ENCODE measurements at regions of chr5 and their contacts with region 1.

Region 1: GRCh38 chr5:60141119-60141518 is 247.6 kb upstream of the PDE4D start:
- DNase-seq: no peak
- ATAC-seq: no peak
- H3K4me3 ChIP-seq: no peak overlapping the region
- H3K27ac ChIP-seq: no peak overlapping the region
- H3K4me1 ChIP-seq: no peaks in the 10 kb centered on the region
- H3K27me3 ChIP-seq: no peaks in the 10 kb centered on the region
- CTCF ChIP-seq: no peak

Region 2: DNA sequence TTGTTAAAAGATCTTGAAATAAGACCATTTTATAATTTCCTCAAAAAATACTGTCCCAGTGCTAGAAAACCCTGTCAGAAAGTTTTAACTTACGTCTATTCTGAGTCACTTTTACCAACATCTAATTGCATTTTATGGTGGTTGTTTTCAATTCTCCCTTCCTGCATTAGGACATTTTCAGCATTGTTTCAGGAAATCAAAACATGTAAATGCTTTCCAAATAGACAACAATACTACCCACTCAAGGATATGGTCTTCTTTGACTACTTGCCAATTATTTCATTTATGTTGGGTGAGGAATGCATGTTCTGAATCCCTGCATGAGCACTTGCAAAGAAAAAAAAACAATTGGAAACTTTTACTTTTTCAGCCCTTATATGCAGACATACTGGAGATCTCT is 37.0 kb after region 1 on chr5:
- CTCF ChIA-PET with region 1: no interaction called
- POLR2A ChIA-PET with region 1: no interaction called
- in situ Hi-C with region 1: no loop called
- intact Hi-C with region 1: loop called (anchors 1 kb)
- DNase-seq: no peak
- ATAC-seq: no peak
- H3K4me3 ChIP-seq: no peak overlapping the region
- H3K27ac ChIP-seq: no peak overlapping the region
- H3K4me1 ChIP-seq: no peaks in the 10 kb centered on the region
- H3K27me3 ChIP-seq: no peaks in the 10 kb centered on the region
- CTCF ChIP-seq: no peak

Region 3: GRCh38 chr5:60196382-60197113 is 55.4 kb after region 1 on chr5:
- CTCF ChIA-PET with region 1: no interaction called
- POLR2A ChIA-PET with region 1: no interaction called
- in situ Hi-C with region 1: no loop called
- intact Hi-C with region 1: no loop called
- DNase-seq: no peak
- ATAC-seq: no peak
- H3K4me3 ChIP-seq: no peak overlapping the region
- H3K27ac ChIP-seq: no peak overlapping the region
- H3K4me1 ChIP-seq: no peaks in the 10 kb centered on the region
- H3K27me3 ChIP-seq: no peaks in the 10 kb centered on the region
- CTCF ChIP-seq: no peak